ENCODE measurements at regions of chr1 and their contacts with region 1.

Region 1: DNA sequence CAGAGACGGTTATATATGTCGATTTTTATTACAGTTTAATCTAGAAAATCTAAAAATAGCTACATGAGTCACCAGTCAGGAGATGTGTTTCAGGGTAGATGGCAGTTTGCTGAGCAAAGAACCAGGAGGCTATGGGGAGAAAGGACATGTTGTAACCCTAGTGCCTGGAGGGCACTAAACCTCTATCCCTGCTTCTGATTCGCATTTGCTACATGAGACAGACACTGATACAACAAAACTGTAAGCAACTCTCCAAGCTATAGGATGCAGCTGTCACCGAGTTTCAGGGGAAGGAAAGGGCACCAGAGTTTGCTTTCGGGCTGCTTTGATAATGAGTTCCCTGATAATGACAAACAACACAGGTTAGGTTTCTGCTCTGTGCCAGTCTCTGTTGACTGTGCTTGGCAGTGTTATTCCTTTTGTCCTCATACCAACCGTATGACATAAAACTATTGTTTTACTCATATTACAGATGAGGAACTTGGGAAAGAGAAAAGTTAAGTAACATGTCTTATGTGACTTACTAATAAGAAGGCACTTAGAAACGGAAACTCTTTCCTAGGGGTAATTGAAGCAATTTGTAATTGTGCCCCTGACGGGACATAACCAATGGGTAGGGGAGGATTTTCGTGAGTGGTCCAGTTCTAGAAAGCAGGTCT is 43.1 kb downstream of the C1orf198 start:
- DNase-seq: no peak
- H3K4me3 ChIP-seq: no peak overlapping the region
- H3K27ac ChIP-seq: no peak overlapping the region
- H3K4me1 ChIP-seq: no peaks in the 10 kb centered on the region
- H3K27me3 ChIP-seq: no peaks in the 10 kb centered on the region
- CTCF ChIP-seq: no peak

Region 2: DNA sequence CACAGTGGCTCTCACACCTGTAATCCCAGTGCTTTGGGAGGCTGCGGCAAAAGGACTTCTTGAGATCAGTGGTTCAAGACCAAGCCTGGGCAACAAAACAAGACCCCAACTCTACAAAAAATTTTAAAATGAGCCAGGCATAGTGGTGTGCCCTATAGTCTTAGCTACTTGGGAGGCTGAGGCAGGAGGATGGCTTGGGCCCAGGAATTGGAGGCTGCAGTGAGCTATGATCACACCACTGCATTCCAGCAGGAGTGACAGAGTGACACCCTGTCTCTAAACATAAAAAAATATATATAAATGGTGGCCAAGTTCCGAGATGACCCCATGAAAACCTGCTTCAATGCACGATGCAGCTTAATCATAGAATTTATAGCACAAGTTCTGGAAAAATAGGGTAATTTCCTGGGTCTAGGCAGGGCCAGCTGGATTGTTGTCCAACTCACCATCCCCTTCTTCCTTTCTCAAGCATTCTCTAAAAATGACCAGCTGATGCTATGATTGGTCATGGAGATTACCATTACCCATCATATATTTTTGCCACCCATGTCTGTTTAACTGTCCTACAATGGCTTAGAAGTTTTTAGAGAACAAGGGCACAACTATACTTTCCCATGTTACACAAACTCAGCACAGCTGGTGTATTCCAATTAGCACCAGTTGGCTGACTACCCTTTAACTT is 410.5 kb after region 1 on chr1:
- CTCF ChIA-PET with region 1: no interaction called
- POLR2A ChIA-PET with region 1: interaction called, 10 read pairs
- intact Hi-C with region 1: no loop called
- DNase-seq: no peak
- H3K4me3 ChIP-seq: no peak overlapping the region
- H3K27ac ChIP-seq: no peak overlapping the region
- H3K4me1 ChIP-seq: no peaks in the 10 kb centered on the region
- H3K27me3 ChIP-seq: no peaks in the 10 kb centered on the region
- CTCF ChIP-seq: no peak

Measured in A673 (cell line).